K562 (cell line): ENCODE measurements at regions of chr3 and their contacts with region 1.

Region 1: DNA sequence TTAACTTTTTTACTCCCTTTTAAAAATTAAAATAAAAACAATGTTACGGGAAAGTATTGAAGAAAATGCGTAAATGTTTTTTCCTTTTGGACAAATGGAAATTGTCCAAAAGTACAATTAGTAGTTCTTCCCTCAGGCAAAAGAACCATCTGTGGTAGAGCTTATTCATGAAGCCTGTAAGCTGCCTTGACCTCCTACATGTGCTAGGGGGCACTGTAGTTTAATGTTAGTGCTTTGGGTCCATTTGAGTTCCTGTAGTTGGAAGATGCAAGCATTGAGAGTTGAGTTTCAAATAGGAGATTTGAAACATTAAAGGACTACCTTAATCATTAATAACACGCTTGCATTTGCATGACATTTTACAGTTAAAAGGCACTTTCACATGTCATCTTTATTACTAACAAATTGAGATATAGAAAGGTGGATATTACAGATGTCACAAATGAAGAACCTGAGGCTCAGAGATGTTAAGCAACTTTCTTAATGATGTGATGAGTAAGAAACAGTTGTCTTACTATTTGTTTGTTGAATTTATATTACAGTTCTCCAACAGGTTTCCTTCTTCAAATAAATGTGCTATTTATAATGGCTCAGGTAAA is 1.8 kb upstream of the ZNF385D start:
- DNase-seq: peak in 3 of 4 experiments; percentile 19 to 30 (median 23)
- ATAC-seq: peak; percentile 74
- H3K4me3 ChIP-seq: no peak overlapping the region
- H3K27ac ChIP-seq: no peak overlapping the region
- H3K4me1 ChIP-seq: no peaks in the 10 kb centered on the region
- H3K27me3 ChIP-seq: no peaks in the 10 kb centered on the region
- CTCF ChIP-seq: peak in 2 of 3 experiments; percentile 50 to 52; a peak in 3 of 6 replicates
- EP300 ChIP-seq: no peak
- POLR2A ChIP-seq: no peak
- RAD21 ChIP-seq: peak in 1 of 2 experiments; percentile 53; a peak in 2 of 4 replicates

Region 2: GRCh38 chr3:21638488-21638887 is 114.4 kb before region 1 on chr3:
- CTCF ChIA-PET with region 1: no interaction called
- POLR2A ChIA-PET with region 1: no interaction called
- in situ Hi-C with region 1: no loop called
- intact Hi-C with region 1: no loop called
- DNase-seq: no peak
- ATAC-seq: no peak
- H3K4me3 ChIP-seq: no peak overlapping the region
- H3K27ac ChIP-seq: no peak overlapping the region
- H3K4me1 ChIP-seq: no peaks in the 10 kb centered on the region
- H3K27me3 ChIP-seq: no peaks in the 10 kb centered on the region
- CTCF ChIP-seq: no peak
- EP300 ChIP-seq: no peak
- POLR2A ChIP-seq: no peak
- RAD21 ChIP-seq: no peak

Region 3: DNA sequence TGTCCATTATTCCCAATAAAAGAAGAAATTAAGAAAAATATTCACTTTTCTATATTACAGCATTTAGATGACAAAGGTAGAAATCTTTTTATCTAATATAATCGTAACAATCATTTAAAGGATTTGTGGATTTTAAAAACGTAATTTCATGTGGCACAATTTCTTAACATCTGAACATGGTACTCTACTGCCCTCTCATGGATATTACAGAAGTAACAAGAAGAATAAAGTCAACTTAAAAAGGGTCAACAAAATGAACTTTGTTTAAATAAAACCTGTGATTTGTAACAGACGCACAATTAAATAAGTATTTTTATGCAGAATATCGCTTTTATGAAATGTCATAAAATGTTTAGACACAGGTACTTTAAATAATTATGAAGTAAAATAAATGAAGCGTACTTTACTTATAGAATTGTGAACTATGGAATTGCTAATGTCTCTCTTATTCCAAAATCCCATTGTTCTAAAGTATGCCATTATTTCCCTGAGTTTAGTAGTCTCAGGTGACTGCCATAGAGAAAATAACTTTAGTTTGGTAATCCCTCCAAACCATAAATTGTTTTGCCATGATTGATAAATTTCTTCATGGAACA is 365.0 kb after region 1 on chr3:
- CTCF ChIA-PET with region 1: no interaction called
- POLR2A ChIA-PET with region 1: no interaction called
- in situ Hi-C with region 1: no loop called
- intact Hi-C with region 1: loop called (anchors 10 kb)
- DNase-seq: peak; percentile 7 to 47 (median 12)
- ATAC-seq: no peak
- H3K4me3 ChIP-seq: no peak overlapping the region
- H3K27ac ChIP-seq: no peak overlapping the region
- H3K4me1 ChIP-seq: no peaks in the 10 kb centered on the region
- H3K27me3 ChIP-seq: no peaks in the 10 kb centered on the region
- CTCF ChIP-seq: peak; percentile 6 to 65 (median 26); a peak in 3 of 6 replicates
- EP300 ChIP-seq: no peak
- POLR2A ChIP-seq: no peak
- RAD21 ChIP-seq: peak; percentile 74 to 81